OCI-LY7 (cell line): ENCODE measurements at regions of chr4 and their contacts with region 1.

Region 1: GRCh38 chr4:88211473-88212252 is 53.2 kb upstream of the ABCG2 start:
- DNase-seq: peak; percentile 65
- H3K4me3 ChIP-seq: no peak overlapping the region
- H3K27ac ChIP-seq: no peak overlapping the region
- H3K4me1 ChIP-seq: no peaks in the 10 kb centered on the region
- CTCF ChIP-seq: peak; percentile 93

Region 2: DNA sequence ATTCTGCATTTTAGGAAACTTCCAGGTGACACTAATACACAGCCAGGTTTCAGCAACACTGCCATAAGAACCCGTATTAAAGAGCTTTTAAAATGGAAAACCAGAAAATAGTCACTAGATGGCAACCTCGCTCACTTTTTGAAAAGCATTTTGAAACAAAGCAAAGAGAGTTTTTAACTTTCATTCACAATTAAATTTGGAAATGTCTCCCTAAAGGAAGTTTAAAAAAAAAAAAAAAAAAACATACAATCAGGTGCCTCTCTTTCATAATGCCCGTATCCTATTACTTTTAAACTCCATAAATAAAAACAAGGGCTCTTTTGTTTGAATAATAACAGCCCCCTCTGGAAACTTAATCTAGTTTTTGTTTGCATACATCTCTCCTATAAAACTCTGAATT is 358.6 kb before region 1 on chr4:
- CTCF ChIA-PET with region 1: interaction called, 4 read pairs
- POLR2A ChIA-PET with region 1: interaction called, 3 read pairs
- intact Hi-C with region 1: loop called (anchors 5 kb)
- DNase-seq: peak; percentile 33
- H3K4me3 ChIP-seq: no peak overlapping the region
- H3K27ac ChIP-seq: no peak overlapping the region
- H3K4me1 ChIP-seq: no peaks in the 10 kb centered on the region
- CTCF ChIP-seq: peak; percentile 81

Region 3: DNA sequence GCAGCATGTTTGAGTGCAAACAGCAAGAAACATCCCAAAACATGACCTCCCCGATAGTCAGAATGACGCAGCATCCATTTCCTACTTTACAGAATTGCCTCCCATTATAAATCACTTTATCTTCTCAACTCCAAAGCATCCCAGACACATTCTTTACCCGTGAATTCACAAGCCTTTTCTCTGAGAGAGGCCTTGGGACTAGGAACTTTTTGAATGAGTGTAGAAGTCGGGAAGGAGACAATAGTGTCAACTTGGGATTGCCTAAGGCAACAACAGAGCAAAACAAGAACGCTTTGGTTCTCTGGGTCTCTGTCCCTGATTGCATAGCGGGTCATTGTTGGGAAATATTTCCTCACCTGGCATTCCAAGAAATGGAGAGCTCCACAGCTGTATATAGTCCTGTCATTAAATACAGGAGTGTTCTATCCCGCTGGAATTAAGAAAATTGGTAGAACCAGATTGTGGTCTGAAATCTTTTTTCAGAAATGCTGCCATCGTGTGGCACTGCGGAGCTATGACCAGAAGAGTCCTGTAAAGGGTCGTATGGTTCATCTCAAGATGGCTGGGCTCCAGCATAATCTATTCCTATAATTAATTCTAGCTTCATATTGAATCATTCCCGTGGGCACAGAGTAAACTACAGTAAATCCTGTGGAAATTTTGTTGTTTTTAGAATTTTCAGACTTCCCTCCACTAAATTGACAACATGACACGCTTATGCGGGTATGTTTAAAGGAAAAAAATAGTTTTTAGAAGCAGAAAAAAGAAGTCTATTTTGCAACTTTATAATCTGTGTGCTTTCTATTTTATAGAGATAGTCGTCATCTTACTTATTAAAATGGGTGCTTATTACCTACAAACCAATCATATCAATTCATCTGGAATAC is 238.1 kb before region 1 on chr4:
- CTCF ChIA-PET with region 1: no interaction called
- POLR2A ChIA-PET with region 1: no interaction called
- intact Hi-C with region 1: loop called (anchors 5 kb)
- DNase-seq: peak; percentile 60
- H3K4me3 ChIP-seq: no peak overlapping the region
- H3K27ac ChIP-seq: no peak overlapping the region
- H3K4me1 ChIP-seq: peaks cover 9% of the 10 kb centered on the region
- CTCF ChIP-seq: peak; percentile 90

Region 4: DNA sequence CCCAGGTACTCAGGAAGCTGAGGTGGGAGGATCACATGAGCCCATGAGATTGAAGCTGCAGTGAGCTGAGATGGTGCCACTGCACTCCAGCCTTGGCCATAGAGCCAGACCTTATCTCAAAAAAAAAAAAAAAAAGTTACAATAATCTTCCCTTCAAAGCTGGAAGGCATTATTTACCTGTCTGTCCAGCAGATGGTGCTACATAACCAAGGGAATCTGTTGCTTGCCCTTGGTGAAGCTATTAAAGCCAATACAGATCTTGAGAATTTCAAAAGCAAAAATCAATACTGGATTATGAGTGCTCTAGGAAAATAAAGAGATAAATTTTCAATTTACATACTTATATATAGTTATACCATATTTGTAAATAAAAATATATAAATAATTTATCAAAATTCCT is 178.4 kb before region 1 on chr4:
- CTCF ChIA-PET with region 1: no interaction called
- POLR2A ChIA-PET with region 1: no interaction called
- intact Hi-C with region 1: loop called (anchors 1 kb)
- DNase-seq: peak; percentile 65
- H3K4me3 ChIP-seq: no peak overlapping the region
- H3K27ac ChIP-seq: no peak overlapping the region
- H3K4me1 ChIP-seq: no peaks in the 10 kb centered on the region
- CTCF ChIP-seq: peak; percentile 82